Calu3 (cell line): ENCODE measurements at regions of chr1 and their contacts with region 1.

Region 1: DNA sequence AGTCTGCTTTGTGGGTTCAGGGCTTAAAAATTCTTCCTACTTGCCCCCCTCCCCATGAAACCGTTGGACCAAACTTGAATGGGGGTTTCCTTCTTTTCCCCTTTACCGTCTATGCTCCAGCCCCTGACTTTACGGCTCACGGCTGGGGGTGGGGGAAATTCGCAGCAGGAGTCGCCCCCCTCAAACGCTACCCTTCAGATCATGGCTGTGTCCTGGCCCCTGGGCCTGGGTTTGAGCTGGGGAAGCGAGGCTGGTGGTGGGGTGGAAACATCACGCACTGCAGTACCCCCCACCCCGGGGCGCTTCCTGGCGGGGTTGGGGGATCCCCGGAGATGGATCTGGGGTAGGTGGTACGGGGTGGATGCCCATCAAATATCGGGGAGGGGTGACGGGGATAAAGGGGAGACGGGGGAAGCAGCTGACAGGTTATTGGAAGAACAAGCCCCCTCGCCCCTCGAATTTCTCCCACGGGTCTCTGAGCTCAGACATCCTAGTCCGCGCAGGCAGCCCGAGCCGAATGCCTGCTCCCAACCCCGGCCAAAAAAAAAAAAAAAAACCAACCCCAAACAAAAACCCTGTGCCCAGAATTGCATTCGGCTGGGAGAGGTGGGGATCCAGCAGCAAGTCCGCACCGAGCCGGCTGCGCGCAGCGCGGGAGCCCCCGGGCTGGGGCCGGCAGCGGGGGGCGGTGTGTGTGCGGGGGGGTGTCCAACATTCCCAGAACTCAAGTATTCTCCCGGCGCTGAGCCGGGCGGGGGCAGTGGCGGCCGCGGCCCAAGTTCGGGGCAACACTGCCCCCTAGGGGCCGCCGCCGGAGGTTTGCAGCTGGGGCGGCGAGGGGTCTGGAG is 59.0 kb upstream of the ACOT11 start:
- DNase-seq: peak; percentile 88
- H3K4me3 Mint-ChIP-seq: peak overlapping the region; percentile 56
- H3K27ac Mint-ChIP-seq: peak overlapping the region; percentile 73
- H3K4me1 Mint-ChIP-seq: peaks cover 21% of the 10 kb centered on the region
- H3K27me3 Mint-ChIP-seq: peaks cover 58% of the 10 kb centered on the region
- CTCF ChIP-seq: peak; percentile 96

Region 2: GRCh38 chr1:53781654-53782053 is 707.3 kb before region 1 on chr1:
- CTCF ChIA-PET with region 1: interaction called, 10 read pairs
- intact Hi-C with region 1: no loop called
- DNase-seq: no peak
- H3K4me3 Mint-ChIP-seq: no peak overlapping the region
- H3K27ac Mint-ChIP-seq: no peak overlapping the region
- H3K4me1 Mint-ChIP-seq: no peaks in the 10 kb centered on the region
- H3K27me3 Mint-ChIP-seq: no peaks in the 10 kb centered on the region
- CTCF ChIP-seq: no peak

Region 3: GRCh38 chr1:54070171-54070837 is 418.7 kb before region 1 on chr1:
- CTCF ChIA-PET with region 1: interaction called, 4 read pairs
- intact Hi-C with region 1: loop called (anchors 2 kb)
- DNase-seq: no peak
- H3K4me3 Mint-ChIP-seq: no peak overlapping the region
- H3K27ac Mint-ChIP-seq: no peak overlapping the region
- H3K4me1 Mint-ChIP-seq: no peaks in the 10 kb centered on the region
- H3K27me3 Mint-ChIP-seq: no peaks in the 10 kb centered on the region
- CTCF ChIP-seq: peak; percentile 51

Region 4: GRCh38 chr1:54121482-54122134 is 367.4 kb before region 1 on chr1:
- CTCF ChIA-PET with region 1: interaction called, 6 read pairs
- intact Hi-C with region 1: loop called (anchors 5 kb)
- DNase-seq: peak; percentile 84
- H3K4me3 Mint-ChIP-seq: no peak overlapping the region
- H3K27ac Mint-ChIP-seq: peak overlapping the region; percentile 29
- H3K4me1 Mint-ChIP-seq: peaks cover 7% of the 10 kb centered on the region
- H3K27me3 Mint-ChIP-seq: no peaks in the 10 kb centered on the region
- CTCF ChIP-seq: peak; percentile 81

Region 5: GRCh38 chr1:54273092-54273794 is 215.8 kb before region 1 on chr1:
- CTCF ChIA-PET with region 1: interaction called, 14 read pairs
- intact Hi-C with region 1: loop called (anchors 1 kb)
- DNase-seq: peak; percentile 67
- H3K4me3 Mint-ChIP-seq: peak overlapping the region; percentile 52
- H3K27ac Mint-ChIP-seq: peak overlapping the region; percentile 45
- H3K4me1 Mint-ChIP-seq: peaks cover 11% of the 10 kb centered on the region
- H3K27me3 Mint-ChIP-seq: no peaks in the 10 kb centered on the region
- CTCF ChIP-seq: peak; percentile 60

Region 6: DNA sequence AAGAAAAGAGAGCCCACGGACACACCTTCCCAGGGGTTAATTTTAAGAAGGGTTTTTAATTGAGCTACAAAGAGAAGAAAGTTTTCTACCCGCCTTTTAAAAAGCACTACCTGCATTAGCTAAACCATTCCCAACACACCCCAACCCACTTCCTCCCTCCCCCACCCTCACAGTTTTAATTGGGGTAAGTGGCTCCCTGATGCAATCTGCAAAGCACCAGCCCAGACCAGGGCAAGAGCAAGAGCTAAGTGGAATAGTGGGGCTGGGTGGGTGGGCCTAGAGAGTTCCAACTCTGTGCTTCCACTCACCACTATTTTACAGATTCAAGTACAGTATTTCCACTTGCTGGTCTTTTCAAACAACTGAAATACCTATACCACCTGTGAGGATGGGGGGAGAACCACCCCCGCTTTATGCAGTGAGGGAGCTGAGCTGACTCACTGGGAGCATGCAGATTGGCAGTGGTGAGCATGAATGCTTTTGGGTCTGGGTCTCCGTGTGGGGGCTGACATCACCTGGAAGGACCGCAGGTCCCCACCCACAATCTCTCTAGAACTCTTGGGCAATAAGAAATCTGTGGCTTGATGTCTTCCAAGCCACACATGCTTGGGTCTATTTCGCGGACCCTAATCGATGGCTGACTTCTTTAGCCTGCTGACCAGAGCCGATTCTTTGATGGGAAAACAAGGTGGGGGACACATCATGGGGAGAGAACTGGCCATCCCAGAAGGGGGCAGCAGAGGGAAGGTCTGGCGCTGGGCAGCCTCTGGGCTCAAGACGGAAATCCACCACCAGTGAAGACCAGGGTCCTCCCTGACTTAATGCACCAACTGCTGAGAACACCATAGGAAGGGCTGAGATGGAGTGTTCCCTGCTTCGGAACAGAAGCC is 178.3 kb before region 1 on chr1:
- CTCF ChIA-PET with region 1: interaction called, 6 read pairs
- intact Hi-C with region 1: loop called (anchors 1 kb)
- DNase-seq: peak; percentile 65
- H3K4me3 Mint-ChIP-seq: no peak overlapping the region
- H3K27ac Mint-ChIP-seq: no peak overlapping the region
- H3K4me1 Mint-ChIP-seq: no peaks in the 10 kb centered on the region
- H3K27me3 Mint-ChIP-seq: no peaks in the 10 kb centered on the region
- CTCF ChIP-seq: peak; percentile 63

Region 7: GRCh38 chr1:54406339-54407153 is 82.5 kb before region 1 on chr1 and contains the start of gene SSBP3:
- CTCF ChIA-PET with region 1: interaction called, 10 read pairs
- intact Hi-C with region 1: loop called (anchors 1 kb)
- DNase-seq: peak; percentile 97
- H3K4me3 Mint-ChIP-seq: peak within 1 kb of the TSS; percentile 78
- H3K27ac Mint-ChIP-seq: peak within 1 kb of the TSS; percentile 45
- H3K4me1 Mint-ChIP-seq: peaks cover 24% of the 10 kb centered on the region
- H3K27me3 Mint-ChIP-seq: no peaks in the 10 kb centered on the region
- CTCF ChIP-seq: no peak
- total RNA-seq, gene SSBP3: 16.6 and 16.7 TPM in 2 replicates

Region 8: GRCh38 chr1:54577612-54578011 is 88.6 kb after region 1 on chr1:
- CTCF ChIA-PET with region 1: no interaction called
- intact Hi-C with region 1: no loop called
- DNase-seq: no peak
- H3K4me3 Mint-ChIP-seq: no peak overlapping the region
- H3K27ac Mint-ChIP-seq: no peak overlapping the region
- H3K4me1 Mint-ChIP-seq: no peaks in the 10 kb centered on the region
- H3K27me3 Mint-ChIP-seq: no peaks in the 10 kb centered on the region
- CTCF ChIP-seq: no peak